Activated T-helper 2 cell treated with anti-CD3 and anti-CD28 coated beads, Interferon-gamma antibody, Interleukin-2, Interleukin-4, amounts not matched to agents 10 μg/mL and 5 μg/mL and 100 μg/mL, durations not matched to agents 14 hours and 24 hours and 36 hours (primary cell): ENCODE measurements at regions of chr17 and their contacts with region 1.

Region 1: GRCh38 chr17:17591355-17592298 is at the start of gene PEMT:
- DNase-seq: peak; percentile 92
- H3K4me3 Mint-ChIP-seq: peak within 1 kb of the TSS; percentile 96
- H3K27ac Mint-ChIP-seq: peak within 1 kb of the TSS; percentile 96
- H3K4me1 Mint-ChIP-seq: peaks cover 12% of the 10 kb centered on the region
- H3K27me3 Mint-ChIP-seq: no peaks in the 10 kb centered on the region
- total RNA-seq, gene PEMT: 37.4 and 39.2 TPM in 2 replicates

Region 2: DNA sequence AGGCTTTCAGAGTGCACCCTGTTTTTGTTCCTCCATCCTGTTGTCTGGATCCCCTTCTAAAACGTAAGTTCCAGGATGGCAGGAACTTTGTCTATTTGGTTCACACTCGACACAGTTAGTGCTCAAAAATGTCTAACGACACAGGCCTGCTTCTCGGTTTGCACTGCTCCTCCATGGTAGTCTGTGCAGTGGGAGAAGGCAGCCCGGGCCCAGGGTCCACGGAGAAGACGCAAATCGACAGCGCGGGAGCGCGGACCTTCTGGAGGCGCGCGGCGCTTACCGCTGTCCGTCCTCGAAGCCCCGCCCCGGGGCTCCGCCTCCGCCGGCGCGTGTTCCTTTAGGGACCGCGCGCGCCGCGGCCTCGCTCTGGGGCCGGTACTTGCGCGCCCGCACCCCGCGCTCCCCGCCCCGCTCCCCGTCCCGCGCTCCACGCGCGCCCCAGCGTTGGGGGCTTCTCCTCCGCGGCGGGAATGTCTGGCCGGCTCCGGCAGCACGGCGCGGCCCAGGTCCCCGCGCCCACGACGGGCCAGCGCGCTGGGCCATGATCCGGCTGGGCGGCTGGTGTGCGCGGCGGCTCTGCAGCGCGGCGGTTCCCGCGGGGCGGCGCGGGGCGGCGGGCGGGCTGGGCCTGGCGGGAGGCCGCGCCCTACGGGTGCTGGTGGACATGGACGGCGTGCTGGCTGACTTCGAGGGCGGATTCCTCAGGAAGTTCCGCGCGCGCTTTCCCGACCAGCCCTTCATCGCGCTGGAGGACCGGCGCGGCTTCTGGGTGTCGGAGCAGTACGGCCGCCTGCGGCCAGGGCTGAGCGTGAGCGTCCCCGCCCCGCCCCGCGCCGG is 288.4 kb before region 1 on chr17 and contains the start of gene NT5M:
- intact Hi-C with region 1: loop called (anchors 5 kb)
- DNase-seq: peak; percentile 71
- H3K4me3 Mint-ChIP-seq: peak within 1 kb of the TSS; percentile 88
- H3K27ac Mint-ChIP-seq: peak within 1 kb of the TSS; percentile 87
- H3K4me1 Mint-ChIP-seq: peaks cover 38% of the 10 kb centered on the region
- H3K27me3 Mint-ChIP-seq: no peaks in the 10 kb centered on the region
- total RNA-seq, gene NT5M: 8.1 and 9.5 TPM in 2 replicates

Region 3: DNA sequence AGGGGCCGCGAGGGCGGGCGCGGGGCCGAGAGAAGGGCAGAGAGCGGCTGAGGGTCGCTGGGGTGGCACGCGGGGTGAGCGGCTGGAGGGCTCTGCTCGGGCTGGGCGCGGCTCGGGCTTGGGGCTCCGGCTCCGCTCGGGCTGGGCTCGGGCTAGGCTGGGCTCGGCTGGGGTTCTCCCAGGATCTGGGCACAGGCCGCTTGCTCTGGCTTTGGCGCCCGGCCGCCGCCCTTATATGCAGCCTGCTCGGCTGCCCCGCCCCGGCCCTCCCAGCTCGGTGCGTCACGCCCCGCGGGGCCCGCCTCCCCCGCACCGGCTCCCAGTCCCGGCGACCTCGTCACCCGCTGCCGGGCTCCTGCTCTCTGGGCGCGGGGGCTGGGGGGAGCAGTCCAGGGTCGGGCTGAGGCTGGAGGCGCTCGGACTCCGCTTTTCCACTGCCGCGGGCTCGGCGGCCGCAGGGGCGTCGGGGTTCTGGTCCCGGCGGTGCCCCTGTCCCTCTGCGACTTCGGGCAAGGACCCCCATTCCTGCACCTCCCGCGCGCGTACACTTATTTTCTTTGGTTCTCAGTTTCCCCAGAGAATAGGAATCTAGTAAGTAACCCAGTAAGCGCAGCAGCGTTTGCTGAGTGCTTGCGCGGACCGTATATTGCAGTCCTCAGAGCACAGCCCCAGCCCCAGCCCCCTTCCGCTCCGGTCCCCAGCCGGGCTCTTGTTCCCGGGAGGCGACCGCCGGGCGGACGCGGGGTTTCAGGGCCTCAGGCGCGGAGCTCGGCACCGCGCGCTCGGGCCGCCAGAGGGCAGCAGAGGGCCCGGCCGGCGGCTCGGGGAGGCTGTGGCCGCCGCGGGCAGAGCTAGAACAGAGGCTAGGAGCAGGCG is 95.2 kb before region 1 on chr17 and contains the start of gene RASD1:
- intact Hi-C with region 1: loop called (anchors 1 kb)
- DNase-seq: peak; percentile 76
- H3K4me3 Mint-ChIP-seq: peak within 1 kb of the TSS; percentile 79
- H3K27ac Mint-ChIP-seq: peak within 1 kb of the TSS; percentile 25
- H3K4me1 Mint-ChIP-seq: peaks cover 8% of the 10 kb centered on the region
- H3K27me3 Mint-ChIP-seq: peaks cover 17% of the 10 kb centered on the region
- total RNA-seq, gene RASD1: 4.6 and 4.9 TPM in 2 replicates

Region 4: DNA sequence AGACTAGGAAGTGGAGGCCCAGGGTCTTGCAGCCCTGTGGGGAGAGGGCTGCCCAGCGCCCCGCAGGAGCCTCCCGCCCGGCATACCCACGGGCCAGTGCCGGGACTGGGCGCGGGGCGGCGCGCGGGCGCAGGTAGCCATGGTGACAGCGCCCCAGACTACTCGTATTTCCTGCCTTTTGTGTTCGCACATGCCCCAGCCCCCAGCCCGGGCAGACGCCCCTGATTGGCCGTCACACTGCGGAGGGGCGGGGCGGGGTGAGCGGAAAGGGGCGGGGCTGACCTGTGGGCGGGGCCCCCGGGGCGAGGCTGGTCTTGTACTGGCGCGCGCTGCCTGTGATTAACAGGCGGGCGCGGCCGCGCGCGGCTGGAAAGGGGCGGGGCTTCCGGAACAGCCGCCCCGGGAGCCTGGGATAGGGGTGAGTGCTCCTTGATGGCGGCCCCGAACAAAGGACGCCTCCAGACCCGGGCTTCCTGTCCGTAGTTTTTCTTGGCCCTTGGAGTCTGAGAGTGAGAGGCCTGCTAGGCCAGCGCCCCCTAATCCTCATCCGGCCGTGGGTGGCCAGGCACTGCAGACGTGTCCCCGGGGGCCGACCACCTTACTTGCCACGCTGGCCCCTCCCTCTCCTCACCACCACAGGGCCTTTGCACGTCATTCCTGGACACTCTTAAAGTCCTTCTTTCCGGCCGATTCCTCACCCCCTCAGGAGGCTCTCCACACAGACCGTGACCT is 160.6 kb after region 1 on chr17:
- intact Hi-C with region 1: loop called (anchors 5 kb)
- DNase-seq: peak; percentile 96
- H3K4me3 Mint-ChIP-seq: peak overlapping the region; percentile 89
- H3K27ac Mint-ChIP-seq: peak overlapping the region; percentile 93
- H3K4me1 Mint-ChIP-seq: peaks cover 39% of the 10 kb centered on the region
- H3K27me3 Mint-ChIP-seq: no peaks in the 10 kb centered on the region

Region 5: DNA sequence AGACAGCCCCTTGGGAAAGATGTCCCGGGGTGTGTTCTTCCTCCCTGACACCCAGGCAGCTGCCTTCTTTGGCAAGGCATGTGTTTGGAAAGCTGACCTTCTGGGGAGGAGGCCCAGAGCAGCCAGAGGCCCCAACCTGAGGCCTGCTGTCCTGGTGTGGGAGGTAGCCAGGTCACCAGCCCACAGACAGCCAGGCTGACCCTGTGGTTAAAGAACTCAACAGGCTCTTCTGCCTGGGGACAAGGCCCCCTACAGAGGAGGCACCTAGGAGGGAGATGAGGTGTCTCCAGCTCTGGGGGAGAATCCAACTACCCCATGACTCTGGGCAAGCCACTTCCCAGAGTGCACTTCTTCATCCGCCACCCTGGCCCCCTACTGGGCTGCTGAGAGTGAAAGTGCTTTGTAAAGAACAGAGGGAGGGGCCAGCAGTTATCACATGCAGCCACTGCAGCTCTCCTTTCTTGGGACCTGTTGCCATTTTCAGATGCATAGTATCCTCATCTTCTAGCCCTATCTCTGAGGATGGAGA is 258.3 kb after region 1 on chr17:
- intact Hi-C with region 1: loop called (anchors 5 kb)
- DNase-seq: peak; percentile 69
- H3K4me3 Mint-ChIP-seq: peak overlapping the region; percentile 63
- H3K27ac Mint-ChIP-seq: peak overlapping the region; percentile 95
- H3K4me1 Mint-ChIP-seq: peaks cover 66% of the 10 kb centered on the region
- H3K27me3 Mint-ChIP-seq: no peaks in the 10 kb centered on the region

Region 6: DNA sequence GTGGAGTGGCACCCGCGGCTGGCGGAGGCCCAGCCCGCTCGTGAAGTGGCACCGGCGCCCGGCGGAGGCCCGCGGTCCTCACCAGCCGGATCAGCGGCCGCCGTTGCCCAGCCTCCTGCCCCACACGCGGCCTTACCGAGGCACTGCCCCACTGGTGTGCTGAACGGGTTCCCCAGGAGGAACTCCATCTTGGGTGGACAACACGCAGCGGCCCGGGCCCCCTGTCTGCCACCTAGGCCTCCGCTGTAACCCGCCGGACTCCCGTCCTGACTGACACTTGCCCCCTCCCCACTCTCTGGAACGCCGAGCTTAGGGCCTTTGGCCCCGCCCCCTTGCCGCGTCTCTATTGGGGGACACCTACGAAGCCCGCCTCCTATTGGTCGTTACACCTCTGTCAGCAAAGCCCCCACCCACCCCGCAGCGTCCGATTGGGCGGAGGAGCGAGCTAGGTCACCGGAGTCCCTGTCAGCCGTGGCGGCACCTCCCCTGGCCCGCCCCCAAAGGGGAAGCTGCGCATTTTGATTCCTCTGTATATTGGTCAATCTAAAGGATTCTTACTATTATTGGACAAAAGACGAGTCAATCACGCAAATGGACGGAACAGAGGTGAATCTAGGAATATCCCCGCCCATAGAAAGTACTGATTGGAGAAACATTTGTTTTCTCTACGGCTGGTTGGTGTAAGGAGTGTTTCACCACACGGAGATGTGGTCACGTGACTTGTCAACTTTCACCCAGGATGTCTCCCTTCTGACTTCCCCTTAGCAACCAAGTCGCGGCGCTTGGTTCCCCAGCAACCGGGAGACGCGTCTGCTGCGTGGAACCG is 380.7 kb after region 1 on chr17 and contains the starts of genes DRC3 and TOM1L2:
- intact Hi-C with region 1: loop called (anchors 1 kb)
- DNase-seq: peak; percentile 100
- H3K4me3 Mint-ChIP-seq: peak within 1 kb of the TSS; percentile 91
- H3K27ac Mint-ChIP-seq: peak within 1 kb of the TSS; percentile 80
- H3K4me1 Mint-ChIP-seq: peaks cover 27% of the 10 kb centered on the region
- H3K27me3 Mint-ChIP-seq: no peaks in the 10 kb centered on the region
- total RNA-seq, gene DRC3: not detected in 2 replicates
- total RNA-seq, gene TOM1L2: 9.4 and 13.4 TPM in 2 replicates

Region 7: DNA sequence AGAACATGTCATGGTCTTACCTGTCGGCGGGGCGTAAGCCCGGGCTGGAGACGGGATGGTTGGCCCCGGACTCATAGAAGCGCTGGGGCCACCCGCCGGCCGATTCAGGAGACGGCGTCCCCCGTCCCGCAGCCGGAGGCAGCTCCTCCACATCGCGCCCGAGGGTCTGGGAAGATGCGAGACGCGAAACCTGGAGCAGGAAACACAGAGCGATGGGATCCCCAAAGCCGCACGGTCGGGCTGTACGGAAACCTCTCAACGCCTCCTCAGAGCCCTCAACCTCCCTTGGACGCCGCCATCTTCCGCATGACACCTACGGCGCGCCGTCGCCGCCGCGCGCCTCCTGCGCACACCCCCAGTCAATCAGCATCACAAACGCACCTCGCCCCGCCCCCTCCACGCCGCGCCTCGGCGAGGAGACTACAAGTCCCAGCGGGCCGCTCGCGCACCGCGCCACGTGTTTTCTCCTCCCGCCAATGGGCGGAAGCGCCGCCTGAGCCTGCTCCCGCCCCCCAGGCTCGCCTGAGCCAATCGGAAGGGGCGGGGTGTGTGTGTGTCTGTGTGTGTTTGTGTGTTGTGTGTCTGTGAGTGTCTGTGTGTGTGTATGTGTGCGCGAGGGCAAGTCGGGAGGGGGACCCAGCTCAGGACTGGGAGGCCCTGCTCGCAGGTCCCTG is 447.4 kb after region 1 on chr17 and contains the starts of genes ATPAF2 and GID4:
- intact Hi-C with region 1: loop called (anchors 2 kb)
- DNase-seq: peak; percentile 100
- H3K4me3 Mint-ChIP-seq: peak within 1 kb of the TSS; percentile 92
- H3K27ac Mint-ChIP-seq: peak within 1 kb of the TSS; percentile 87
- H3K4me1 Mint-ChIP-seq: peaks cover 34% of the 10 kb centered on the region
- H3K27me3 Mint-ChIP-seq: no peaks in the 10 kb centered on the region
- total RNA-seq, gene ATPAF2: 29.9 and 31.3 TPM in 2 replicates
- total RNA-seq, gene GID4: 9.3 and 10.8 TPM in 2 replicates